GM12878 (cell line): ENCODE measurements at regions of chr12 and their contacts with region 1.

Region 1: DNA sequence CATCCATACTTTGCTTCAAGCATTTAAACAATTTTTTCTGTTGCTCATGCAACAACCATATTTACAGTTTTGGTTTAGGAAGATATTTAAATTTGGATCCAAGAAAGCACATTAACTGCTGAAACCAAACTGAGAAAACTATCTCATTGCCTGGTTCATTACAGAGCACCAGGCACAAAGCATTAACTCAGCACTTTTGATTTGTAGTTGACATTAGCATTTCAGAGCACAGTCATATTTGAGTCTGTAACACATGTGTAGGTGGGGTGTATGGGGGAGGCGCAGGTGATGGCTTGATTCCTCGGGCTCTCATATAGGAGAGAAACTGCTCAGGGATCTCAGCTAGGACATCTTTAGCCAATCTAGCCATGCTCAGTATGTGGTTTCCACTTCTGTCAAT is 251.7 kb downstream of the CPNE8 start:
- DNase-seq: no peak
- ATAC-seq: no peak
- H3K4me3 ChIP-seq: no peak overlapping the region
- H3K27ac ChIP-seq: no peak overlapping the region
- H3K4me1 ChIP-seq: no peaks in the 10 kb centered on the region
- H3K27me3 ChIP-seq: no peaks in the 10 kb centered on the region
- CTCF ChIP-seq: no peak
- EP300 ChIP-seq: no peak
- POLR2A ChIP-seq: no peak
- RAD21 ChIP-seq: no peak

Region 2: GRCh38 chr12:38350342-38351174 is 303.1 kb before region 1 on chr12:
- CTCF ChIA-PET with region 1: no interaction called
- POLR2A ChIA-PET with region 1: no interaction called
- RAD21 ChIA-PET with region 1: no interaction called
- SMC1A ChIA-PET with region 1: no interaction called
- in situ Hi-C with region 1: no loop called
- intact Hi-C with region 1: loop called (anchors 10 kb)
- DNase-seq: peak; percentile 78
- ATAC-seq: peak; percentile 100
- H3K4me3 ChIP-seq: peak overlapping the region; percentile 2; the same call in 1 of the 2 replicates
- H3K27ac ChIP-seq: peak overlapping the region; percentile 77
- H3K4me1 ChIP-seq: peaks cover 5% of the 10 kb centered on the region
- H3K27me3 ChIP-seq: no peaks in the 10 kb centered on the region
- CTCF ChIP-seq: no peak
- EP300 ChIP-seq: peak; percentile 77 to 93
- POLR2A ChIP-seq: no peak
- RAD21 ChIP-seq: no peak